Colonic mucosa (tissue), 4 donors: ENCODE measurements at regions of chr11 and their contacts with region 1.

Region 1: GRCh38 chr11:7688238-7688826 is 15.0 kb upstream of the CYB5R2 start:
- DNase-seq: no peak
- H3K4me3 ChIP-seq: no peak overlapping the region
- H3K27ac ChIP-seq: no peak overlapping the region
- H3K4me1 ChIP-seq: no peaks in the 10 kb centered on the region
- H3K27me3 ChIP-seq: no peaks in the 10 kb centered on the region
- CTCF ChIP-seq: peak; percentile 75

Region 2: DNA sequence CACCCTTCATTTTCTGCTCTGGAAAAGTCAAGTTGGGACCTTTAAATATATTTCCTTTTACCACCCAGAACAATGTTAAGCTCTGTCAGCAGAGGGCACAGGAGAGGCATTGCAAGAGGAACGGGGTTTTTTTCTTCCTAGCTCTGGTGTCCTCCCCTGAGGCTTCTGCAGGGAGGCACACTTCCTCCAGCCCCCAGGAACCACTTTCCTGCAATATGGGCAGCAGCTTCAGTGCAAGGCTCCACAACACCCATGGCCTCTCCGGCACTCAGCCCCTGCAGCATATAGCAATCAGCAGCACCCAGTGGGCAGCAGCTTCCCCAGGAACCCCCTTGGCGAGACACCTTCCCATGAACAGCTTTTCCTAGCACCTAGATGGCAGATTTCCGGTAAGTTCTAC is 335.2 kb before region 1 on chr11:
- intact Hi-C with region 1: loop called (anchors 10 kb)
- DNase-seq: peak; percentile 23
- H3K4me3 ChIP-seq: no peak overlapping the region
- H3K27ac ChIP-seq: no peak overlapping the region
- H3K4me1 ChIP-seq: no peaks in the 10 kb centered on the region
- H3K27me3 ChIP-seq: no peaks in the 10 kb centered on the region
- CTCF ChIP-seq: peak; percentile 26

Region 3: DNA sequence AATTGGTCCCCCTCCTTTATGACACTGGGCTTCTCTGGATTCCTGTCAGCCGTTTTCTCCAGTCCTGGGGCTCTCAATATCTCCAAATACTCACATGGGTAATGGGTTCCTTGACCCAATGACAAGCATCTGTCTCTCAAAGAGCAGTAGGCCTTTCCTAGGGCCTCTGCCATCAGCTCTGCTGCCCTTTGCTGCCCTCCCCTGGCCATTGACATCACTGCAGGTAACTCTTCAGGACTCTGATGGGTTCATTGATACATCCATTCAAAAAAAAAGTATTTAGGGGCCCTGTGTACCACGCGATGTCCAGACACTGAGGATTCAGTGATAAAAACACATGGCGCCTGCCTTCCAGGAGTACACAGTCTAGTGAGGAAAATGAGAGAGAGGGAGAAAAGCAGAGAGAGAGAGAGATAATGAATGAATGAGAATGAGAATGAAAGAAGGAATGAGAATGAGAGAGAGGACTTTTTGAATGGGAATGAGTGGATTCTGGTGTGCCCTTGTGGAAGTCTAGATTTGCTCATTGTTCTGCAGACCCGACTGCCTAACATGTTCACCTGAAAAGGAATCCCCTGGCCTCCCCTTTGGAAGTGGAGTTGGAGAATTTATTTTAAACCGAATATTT is 245.6 kb before region 1 on chr11:
- intact Hi-C with region 1: loop called (anchors 10 kb)
- DNase-seq: peak; percentile 71
- H3K4me3 ChIP-seq: no peak overlapping the region
- H3K27ac ChIP-seq: no peak overlapping the region
- H3K4me1 ChIP-seq: no peaks in the 10 kb centered on the region
- H3K27me3 ChIP-seq: no peaks in the 10 kb centered on the region
- CTCF ChIP-seq: peak; percentile 68